Activated B cell treated with CpG ODN at 0.5 μM for 24 hours (primary cell): ENCODE measurements at regions of chr10 and their contacts with region 1.

Region 1: DNA sequence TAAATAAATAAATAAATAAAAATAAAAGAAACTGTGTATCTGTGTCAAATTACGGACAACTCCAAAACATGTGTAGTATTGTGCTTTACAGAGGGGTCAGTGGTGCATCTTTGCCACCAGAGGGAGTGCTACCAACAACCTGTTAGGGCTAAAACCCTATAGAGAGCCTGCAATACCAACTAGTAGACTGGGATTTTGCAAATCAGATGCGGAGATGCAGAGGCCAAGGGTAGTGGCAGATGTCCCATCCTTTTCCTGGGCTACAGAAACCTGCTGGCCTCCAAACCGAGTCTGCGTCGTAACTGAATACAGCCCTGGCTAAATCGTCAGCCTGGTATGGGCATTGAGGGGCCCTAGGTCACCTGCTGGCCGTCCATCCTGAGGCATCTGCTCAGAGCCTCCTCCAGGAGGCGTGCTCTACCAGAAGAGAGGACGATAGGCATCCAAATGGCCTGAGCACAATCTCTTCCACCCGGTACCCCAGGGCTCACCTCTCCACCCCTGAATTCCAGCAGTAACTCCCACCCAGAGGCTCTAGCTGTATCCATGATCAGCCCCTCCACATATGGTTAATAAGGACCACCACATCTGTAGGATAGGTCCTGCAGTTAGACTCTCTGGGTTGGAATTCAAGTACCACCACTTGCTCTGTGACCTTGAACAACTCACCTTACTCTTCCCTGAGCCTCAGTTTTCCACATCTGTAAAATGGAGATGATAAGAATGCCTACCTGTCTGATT is 6.2 kb upstream of the RRP12 start:
- DNase-seq: peak; percentile 47
- ATAC-seq: peak; percentile 99
- H3K4me3 Mint-ChIP-seq: peak overlapping the region; percentile 56
- H3K27ac Mint-ChIP-seq: no peak overlapping the region
- H3K4me1 Mint-ChIP-seq: peaks cover 9% of the 10 kb centered on the region
- H3K27me3 Mint-ChIP-seq: no peaks in the 10 kb centered on the region
- CTCF ChIP-seq: peak; percentile 42

Region 2: GRCh38 chr10:97425964-97426775 is 18.8 kb after region 1 on chr10 and contains the start of gene PGAM1:
- CTCF ChIA-PET with region 1: no interaction called
- POLR2A ChIA-PET with region 1: interaction called, 7 read pairs
- intact Hi-C with region 1: loop called (anchors 1 kb)
- DNase-seq: peak; percentile 97
- ATAC-seq: peak; percentile 88
- H3K4me3 Mint-ChIP-seq: peak within 1 kb of the TSS; percentile 92
- H3K27ac Mint-ChIP-seq: peak within 1 kb of the TSS; percentile 94
- H3K4me1 Mint-ChIP-seq: peaks cover 43% of the 10 kb centered on the region
- H3K27me3 Mint-ChIP-seq: no peaks in the 10 kb centered on the region
- CTCF ChIP-seq: no peak
- total RNA-seq, gene PGAM1: 162 and 166 TPM in 2 replicates

Region 3: DNA sequence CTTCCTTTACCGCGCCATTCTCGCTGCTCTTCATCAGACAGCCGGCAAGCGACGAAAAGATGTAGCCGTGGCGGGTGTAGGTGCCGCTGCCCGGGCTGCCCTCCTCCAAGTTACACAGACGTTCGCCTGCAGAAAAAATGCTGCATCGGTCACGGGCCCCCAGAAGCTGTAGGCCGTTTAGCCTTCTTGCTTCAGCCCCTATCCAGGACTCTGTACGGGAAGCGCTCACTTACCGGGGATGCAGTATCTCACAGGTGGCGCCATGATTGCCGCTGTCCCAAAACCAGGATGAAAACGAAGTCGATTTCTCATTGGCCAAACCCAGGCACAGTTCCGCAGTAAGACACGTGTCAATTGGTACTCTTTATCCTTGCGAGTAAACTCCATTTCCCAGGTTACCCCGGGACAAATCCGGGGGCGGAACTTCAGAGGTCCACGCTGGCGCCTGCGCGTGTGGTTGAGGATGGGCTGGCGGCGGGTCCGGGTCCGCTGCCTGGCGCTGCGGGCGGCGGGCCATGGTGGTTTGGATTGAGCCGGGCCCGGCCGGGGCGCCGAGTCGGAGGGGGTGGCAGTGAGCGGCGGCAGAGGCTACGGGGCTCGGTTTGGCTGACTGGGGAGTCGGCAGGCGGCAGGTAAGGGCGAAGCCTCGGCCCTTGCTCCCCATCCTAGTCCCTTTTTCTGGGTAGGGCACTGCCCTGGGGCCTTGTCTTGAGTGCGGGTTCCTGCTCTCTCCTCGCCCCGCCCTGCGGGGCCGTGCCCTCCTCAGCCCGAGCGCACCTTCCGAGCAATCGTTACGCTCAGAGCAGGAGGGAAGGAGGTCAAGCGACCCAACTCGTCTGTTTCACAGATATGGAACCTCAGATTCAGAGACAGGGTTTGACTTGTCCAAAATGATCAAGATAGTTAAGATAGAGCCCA is 38.6 kb after region 1 on chr10 and contains the starts of genes EXOSC1 and ZDHHC16:
- CTCF ChIA-PET with region 1: no interaction called
- POLR2A ChIA-PET with region 1: no interaction called
- intact Hi-C with region 1: loop called (anchors 1 kb)
- DNase-seq: peak; percentile 80
- ATAC-seq: peak; percentile 98
- H3K4me3 Mint-ChIP-seq: peak within 1 kb of the TSS; percentile 99
- H3K27ac Mint-ChIP-seq: peak within 1 kb of the TSS; percentile 93
- H3K4me1 Mint-ChIP-seq: peaks cover 43% of the 10 kb centered on the region
- H3K27me3 Mint-ChIP-seq: no peaks in the 10 kb centered on the region
- CTCF ChIP-seq: no peak
- total RNA-seq, gene EXOSC1: 47.4 and 53.8 TPM in 2 replicates
- total RNA-seq, gene ZDHHC16: 39.0 and 40.6 TPM in 2 replicates

Region 4: DNA sequence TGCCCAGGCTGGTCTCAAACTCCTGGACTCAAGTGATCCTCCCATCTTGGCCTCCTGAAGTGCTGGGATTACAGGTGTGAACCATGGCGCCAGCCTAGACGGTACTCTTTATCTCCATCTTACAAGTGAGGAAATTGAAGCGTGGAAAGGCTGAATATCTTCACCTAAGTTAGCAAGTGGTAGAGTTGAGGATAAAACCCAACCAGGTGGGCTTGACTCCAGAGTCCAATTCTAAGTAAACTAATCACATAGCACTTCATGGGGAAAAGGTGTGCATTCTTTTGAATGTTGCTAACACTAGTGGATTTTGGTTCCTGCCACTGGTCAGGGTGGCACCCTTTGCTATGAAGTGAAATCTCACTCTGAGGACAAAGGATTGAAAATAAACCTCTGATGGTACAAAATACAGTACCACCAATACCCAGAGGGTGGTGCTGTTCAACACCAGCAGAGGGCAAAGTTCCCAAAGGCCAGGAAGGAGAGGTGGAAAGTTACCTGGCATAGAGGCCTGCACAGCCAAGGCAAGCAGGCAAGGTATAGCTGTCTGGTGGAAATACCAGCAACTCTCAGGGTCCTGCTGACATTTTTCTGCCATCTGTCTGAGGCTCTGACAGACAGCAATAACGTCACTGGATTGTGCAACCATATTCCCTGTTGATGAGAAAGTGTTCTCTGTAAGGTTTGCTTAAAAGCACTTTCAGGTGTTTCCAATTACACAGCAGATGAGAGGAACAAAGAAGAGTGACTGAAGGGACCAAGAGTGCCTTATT is 56.2 kb after region 1 on chr10:
- CTCF ChIA-PET with region 1: no interaction called
- POLR2A ChIA-PET with region 1: no interaction called
- intact Hi-C with region 1: loop called (anchors 1 kb)
- DNase-seq: no peak
- ATAC-seq: peak; percentile 76
- H3K4me3 Mint-ChIP-seq: no peak overlapping the region
- H3K27ac Mint-ChIP-seq: no peak overlapping the region
- H3K4me1 Mint-ChIP-seq: no peaks in the 10 kb centered on the region
- H3K27me3 Mint-ChIP-seq: no peaks in the 10 kb centered on the region
- CTCF ChIP-seq: no peak

Region 5: DNA sequence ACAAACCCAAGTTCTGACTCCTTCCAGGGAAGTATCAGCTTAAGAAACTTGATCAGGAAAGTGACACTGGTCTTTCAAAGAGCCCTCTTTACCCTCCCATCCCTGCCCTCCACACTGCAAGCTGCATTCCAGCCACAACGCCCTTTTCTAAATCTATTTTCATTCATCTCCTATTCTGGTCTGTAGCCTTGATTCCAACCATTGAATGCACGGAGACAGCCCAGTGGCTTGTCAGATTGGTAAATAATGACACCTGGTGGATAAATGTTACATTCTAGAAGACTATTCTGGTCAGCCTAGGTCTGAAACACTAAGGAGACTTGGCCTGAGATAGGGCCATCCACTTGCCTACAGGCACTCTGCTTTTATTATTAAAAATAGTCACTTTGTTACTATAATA is 205.0 kb after region 1 on chr10:
- CTCF ChIA-PET with region 1: no interaction called
- POLR2A ChIA-PET with region 1: no interaction called
- intact Hi-C with region 1: loop called (anchors 1 kb)
- DNase-seq: no peak
- ATAC-seq: no peak
- H3K4me3 Mint-ChIP-seq: no peak overlapping the region
- H3K27ac Mint-ChIP-seq: no peak overlapping the region
- H3K4me1 Mint-ChIP-seq: no peaks in the 10 kb centered on the region
- H3K27me3 Mint-ChIP-seq: no peaks in the 10 kb centered on the region
- CTCF ChIP-seq: no peak

Region 6: GRCh38 chr10:97648562-97649404 is 241.4 kb after region 1 on chr10:
- CTCF ChIA-PET with region 1: no interaction called
- POLR2A ChIA-PET with region 1: no interaction called
- intact Hi-C with region 1: no loop called
- DNase-seq: no peak
- ATAC-seq: peak; percentile 97
- H3K4me3 Mint-ChIP-seq: peak overlapping the region; percentile 25
- H3K27ac Mint-ChIP-seq: peak overlapping the region; percentile 76
- H3K4me1 Mint-ChIP-seq: peaks cover 16% of the 10 kb centered on the region
- H3K27me3 Mint-ChIP-seq: no peaks in the 10 kb centered on the region
- CTCF ChIP-seq: no peak

Region 7: GRCh38 chr10:97731346-97732051 is 324.1 kb after region 1 on chr10:
- CTCF ChIA-PET with region 1: no interaction called
- POLR2A ChIA-PET with region 1: no interaction called
- intact Hi-C with region 1: loop called (anchors 1 kb)
- DNase-seq: no peak
- ATAC-seq: peak; percentile 75
- H3K4me3 Mint-ChIP-seq: no peak overlapping the region
- H3K27ac Mint-ChIP-seq: no peak overlapping the region
- H3K4me1 Mint-ChIP-seq: peaks cover 5% of the 10 kb centered on the region
- H3K27me3 Mint-ChIP-seq: peaks cover 8% of the 10 kb centered on the region
- CTCF ChIP-seq: no peak